B cell (primary cell): ENCODE measurements at regions of chr2 and their contacts with region 1.

Region 1: GRCh38 chr2:233108611-233109490 is 48.7 kb downstream of the INPP5D start:
- DNase-seq: peak; percentile 42
- ATAC-seq: peak; percentile 63
- H3K4me3 ChIP-seq: no peak overlapping the region
- H3K4me3 Mint-ChIP-seq: peak overlapping the region; percentile 82
- H3K27ac ChIP-seq: peak overlapping the region in 1 of 2 donors; percentile 73
- H3K27ac Mint-ChIP-seq: peak overlapping the region; percentile 89
- H3K4me1 ChIP-seq: peaks cover 68 to 78% of the 10 kb centered on the region in 2 donors
- H3K4me1 Mint-ChIP-seq: peaks cover 80% of the 10 kb centered on the region
- H3K27me3 ChIP-seq: no peaks in the 10 kb centered on the region
- H3K27me3 Mint-ChIP-seq: no peaks in the 10 kb centered on the region
- CTCF ChIP-seq: no peak

Region 2: GRCh38 chr2:232951891-232952290 is 157.0 kb before region 1 on chr2:
- CTCF ChIA-PET with region 1: no interaction called
- POLR2A ChIA-PET with region 1: no interaction called
- intact Hi-C with region 1: no loop called
- DNase-seq: no peak
- ATAC-seq: no peak
- H3K4me3 ChIP-seq: no peak overlapping the region
- H3K4me3 Mint-ChIP-seq: no peak overlapping the region
- H3K27ac ChIP-seq: no peak overlapping the region
- H3K27ac Mint-ChIP-seq: no peak overlapping the region
- H3K4me1 ChIP-seq: peaks cover 23 to 24% of the 10 kb centered on the region in 2 donors
- H3K4me1 Mint-ChIP-seq: peaks cover 23% of the 10 kb centered on the region
- H3K27me3 ChIP-seq: no peaks in the 10 kb centered on the region
- H3K27me3 Mint-ChIP-seq: no peaks in the 10 kb centered on the region
- CTCF ChIP-seq: no peak

Region 3: GRCh38 chr2:233075966-233076339 is 32.9 kb before region 1 on chr2:
- CTCF ChIA-PET with region 1: interaction called, 5 read pairs
- POLR2A ChIA-PET with region 1: interaction called, 12 read pairs
- intact Hi-C with region 1: no loop called
- DNase-seq: peak; percentile 86
- ATAC-seq: peak; percentile 83
- H3K4me3 ChIP-seq: peak overlapping the region; percentile 8 to 53 (median 35)
- H3K4me3 Mint-ChIP-seq: no peak overlapping the region
- H3K27ac ChIP-seq: peak overlapping the region; percentile 77 to 87
- H3K27ac Mint-ChIP-seq: no peak overlapping the region
- H3K4me1 ChIP-seq: peaks cover 91% of the 10 kb centered on the region in 2 donors
- H3K4me1 Mint-ChIP-seq: peaks cover 50% of the 10 kb centered on the region
- H3K27me3 ChIP-seq: no peaks in the 10 kb centered on the region
- H3K27me3 Mint-ChIP-seq: no peaks in the 10 kb centered on the region
- CTCF ChIP-seq: no peak

Region 4: DNA sequence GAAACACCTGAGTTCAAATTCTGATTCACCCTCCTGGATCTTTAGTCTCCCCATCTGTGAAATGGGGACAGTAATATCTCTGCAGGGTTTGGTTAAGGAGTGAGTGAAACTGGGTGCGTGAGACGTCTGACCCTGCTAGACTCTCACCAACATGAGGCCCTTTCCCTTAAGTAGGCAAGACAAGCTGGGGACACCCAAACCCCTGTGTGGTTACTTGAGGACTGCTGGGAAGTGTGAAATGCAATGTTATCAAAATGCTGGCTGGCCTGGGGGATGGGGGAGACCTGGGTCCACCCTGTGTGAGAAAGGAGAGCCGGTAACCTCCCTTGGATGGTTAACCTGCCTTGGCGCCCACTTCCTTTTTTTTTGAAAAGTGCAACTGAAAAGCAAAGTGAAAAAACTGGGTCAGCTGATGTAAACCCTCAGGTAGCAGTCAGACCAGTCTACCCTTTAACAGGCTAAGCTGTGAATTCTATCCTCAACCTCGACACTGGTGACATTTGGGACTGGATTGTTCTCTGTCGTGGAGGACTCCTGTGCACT is 33.6 kb after region 1 on chr2:
- CTCF ChIA-PET with region 1: no interaction called
- POLR2A ChIA-PET with region 1: interaction called, 5 read pairs
- intact Hi-C with region 1: loop called (anchors 5 kb)
- DNase-seq: peak; percentile 72
- ATAC-seq: peak; percentile 82
- H3K4me3 ChIP-seq: no peak overlapping the region
- H3K4me3 Mint-ChIP-seq: peak overlapping the region; percentile 54
- H3K27ac ChIP-seq: peak overlapping the region; percentile 38 to 54
- H3K27ac Mint-ChIP-seq: peak overlapping the region; percentile 91
- H3K4me1 ChIP-seq: peaks cover 13 to 19% of the 10 kb centered on the region in 2 donors
- H3K4me1 Mint-ChIP-seq: peaks cover 34% of the 10 kb centered on the region
- H3K27me3 ChIP-seq: no peaks in the 10 kb centered on the region
- H3K27me3 Mint-ChIP-seq: no peaks in the 10 kb centered on the region
- CTCF ChIP-seq: no peak

Region 5: DNA sequence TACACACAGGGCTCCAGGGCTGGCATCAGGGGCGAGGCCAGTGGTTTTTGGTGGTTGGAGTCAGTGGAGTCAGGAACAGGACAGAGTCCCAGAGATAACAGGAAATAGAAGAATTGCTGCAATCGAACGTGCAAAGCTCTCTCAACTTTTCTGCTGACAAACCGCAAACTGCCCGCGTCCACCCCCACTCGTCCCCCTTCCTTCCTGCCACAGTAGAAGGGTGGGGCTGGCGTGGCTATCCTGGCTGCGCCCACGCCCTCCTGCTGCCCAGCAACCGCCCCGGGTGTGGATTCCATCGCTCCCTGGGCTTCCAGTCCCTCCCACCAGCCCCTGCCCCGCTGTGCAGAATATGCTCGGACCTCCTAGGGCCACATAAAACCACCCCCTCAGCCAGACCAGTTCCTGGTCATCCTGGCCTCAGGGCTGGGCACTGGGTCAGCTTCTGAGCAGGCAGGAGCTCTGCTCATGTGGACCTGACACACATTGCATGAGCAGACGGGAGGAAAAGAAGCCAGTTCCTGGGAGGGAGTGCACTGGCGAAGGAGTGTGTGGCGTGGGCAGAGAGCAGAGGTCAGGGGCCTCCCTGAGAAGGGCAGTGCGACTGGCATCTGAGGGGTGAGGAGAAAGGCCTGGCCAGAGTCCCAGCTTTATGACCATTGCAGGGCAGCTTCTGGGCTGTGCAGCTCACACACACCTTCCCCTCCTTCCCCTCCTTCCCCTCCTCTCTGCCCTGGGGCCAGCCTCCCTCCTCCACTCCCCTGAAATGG is 57.2 kb after region 1 on chr2:
- CTCF ChIA-PET with region 1: no interaction called
- POLR2A ChIA-PET with region 1: no interaction called
- intact Hi-C with region 1: no loop called
- DNase-seq: no peak
- ATAC-seq: no peak
- H3K4me3 ChIP-seq: no peak overlapping the region
- H3K4me3 Mint-ChIP-seq: no peak overlapping the region
- H3K27ac ChIP-seq: peak overlapping the region in 1 of 2 donors; percentile 4
- H3K27ac Mint-ChIP-seq: peak overlapping the region; percentile 41
- H3K4me1 ChIP-seq: no peaks in the 10 kb centered on the region
- H3K4me1 Mint-ChIP-seq: no peaks in the 10 kb centered on the region
- H3K27me3 ChIP-seq: no peaks in the 10 kb centered on the region
- H3K27me3 Mint-ChIP-seq: no peaks in the 10 kb centered on the region
- CTCF ChIP-seq: no peak